Right cardiac atrium (tissue), 5 donors: ENCODE measurements at regions of chr2 and their contacts with region 1.

Region 1: DNA sequence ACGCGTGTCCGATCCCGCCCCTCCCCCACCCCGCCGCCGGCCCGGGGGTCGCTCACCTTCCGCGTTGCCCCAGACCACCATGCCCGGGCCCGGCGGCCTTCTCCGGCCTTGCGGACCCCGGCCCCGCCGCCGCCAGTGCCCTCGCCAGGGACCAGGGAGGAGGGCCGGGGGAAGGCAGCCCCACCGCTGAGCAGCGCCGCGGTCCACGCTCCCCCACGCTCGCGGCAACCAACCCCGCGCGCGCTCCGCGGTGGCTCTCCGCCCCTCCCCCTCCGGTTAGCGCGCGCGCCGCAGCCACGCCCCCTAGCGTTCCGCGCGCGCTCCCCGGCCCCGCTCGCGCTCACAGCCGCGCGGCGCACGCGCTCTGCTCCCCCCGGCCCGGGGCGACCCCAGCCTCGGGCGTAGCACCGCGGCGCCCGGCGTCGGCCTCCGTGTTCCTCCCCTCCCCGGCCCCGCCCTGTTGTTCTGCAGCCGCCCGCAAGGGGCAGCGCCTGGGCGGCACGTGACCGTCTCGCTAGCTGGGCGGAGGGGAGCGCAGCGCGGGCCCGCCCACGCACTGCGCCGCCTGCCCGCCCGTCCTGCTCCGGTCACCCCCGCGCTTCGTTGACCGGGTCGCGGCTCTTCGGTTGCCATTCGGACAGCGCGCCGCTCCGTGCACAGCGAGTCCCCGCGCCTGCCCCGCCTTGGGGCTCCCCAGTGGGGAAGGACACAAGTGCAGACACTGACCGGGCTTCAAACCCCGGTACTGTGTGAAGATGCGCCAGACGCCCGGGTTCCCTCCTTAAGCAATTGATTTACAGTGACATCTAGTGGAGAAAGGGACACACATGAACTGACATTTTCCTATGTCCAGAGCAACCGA is at the start of gene REV1:
- DNase-seq: peak; percentile 95 to 98 (median 97)
- ATAC-seq: peak; percentile 93 to 95
- H3K4me3 ChIP-seq: peak within 1 kb of the TSS; percentile 92
- H3K27ac ChIP-seq: peak within 1 kb of the TSS; percentile 96
- H3K4me1 ChIP-seq: peaks cover 2% of the 10 kb centered on the region
- H3K27me3 ChIP-seq: no peaks in the 10 kb centered on the region
- total RNA-seq, gene REV1: 31.0 to 37.1 (median 34.3) TPM

Region 2: DNA sequence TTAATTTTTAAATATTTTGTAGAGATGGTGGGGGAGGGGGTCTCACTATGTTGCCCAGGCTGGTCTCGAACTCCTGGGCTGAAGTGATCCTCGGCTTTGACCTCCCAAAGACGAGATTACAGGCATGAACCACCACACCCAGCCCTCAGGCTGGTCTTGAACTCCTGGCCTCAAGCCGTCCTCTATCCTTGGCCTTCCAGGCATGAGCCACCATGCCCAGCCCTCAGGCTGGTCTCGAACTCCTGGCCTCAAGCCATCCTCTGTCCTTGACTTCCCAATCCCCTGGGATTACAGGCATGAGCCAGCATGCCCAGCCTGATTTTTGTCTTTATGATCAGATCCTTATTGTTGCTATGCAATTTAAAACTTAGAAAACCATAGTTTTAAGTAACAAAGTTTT is 178.5 kb before region 1 on chr2:
- intact Hi-C with region 1: no loop called
- DNase-seq: no peak
- ATAC-seq: no peak
- H3K4me3 ChIP-seq: no peak overlapping the region
- H3K27ac ChIP-seq: no peak overlapping the region
- H3K4me1 ChIP-seq: no peaks in the 10 kb centered on the region
- H3K27me3 ChIP-seq: no peaks in the 10 kb centered on the region

Region 3: GRCh38 chr2:99337113-99338028 is 152.6 kb before region 1 on chr2 and contains the start of gene EIF5B:
- intact Hi-C with region 1: loop called in 3 of 4 experiments (anchors 5 to 10 kb)
- DNase-seq: peak; percentile 98 to 99 (median 99)
- ATAC-seq: peak; percentile 95
- H3K4me3 ChIP-seq: peak within 1 kb of the TSS; percentile 84
- H3K27ac ChIP-seq: peak within 1 kb of the TSS; percentile 98
- H3K4me1 ChIP-seq: peaks cover 2% of the 10 kb centered on the region
- H3K27me3 ChIP-seq: no peaks in the 10 kb centered on the region
- total RNA-seq, gene EIF5B: 67.1 to 79.9 (median 71.9) TPM

Region 4: DNA sequence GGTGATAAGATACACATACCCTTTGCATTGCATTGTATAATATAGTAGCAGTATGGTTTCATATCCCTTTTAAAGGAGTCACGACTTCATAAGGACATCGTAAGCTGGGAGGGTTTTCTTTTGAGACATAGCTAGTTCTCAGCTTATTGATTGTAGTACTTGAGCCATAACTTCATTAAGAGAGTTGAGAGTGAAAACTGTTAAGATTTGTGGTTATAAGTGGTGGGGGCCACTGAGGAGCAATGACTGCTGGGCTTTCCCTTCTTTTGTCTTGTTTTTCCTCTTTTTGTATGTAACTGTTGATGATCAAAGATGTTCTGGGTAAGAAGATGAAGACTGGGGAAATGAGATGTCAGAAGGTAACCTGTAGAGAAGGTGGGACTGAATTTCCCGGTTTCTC is 141.8 kb before region 1 on chr2:
- intact Hi-C with region 1: no loop called
- DNase-seq: no peak
- ATAC-seq: no peak
- H3K4me3 ChIP-seq: no peak overlapping the region
- H3K27ac ChIP-seq: no peak overlapping the region
- H3K4me1 ChIP-seq: peaks cover 2% of the 10 kb centered on the region
- H3K27me3 ChIP-seq: no peaks in the 10 kb centered on the region

Region 5: DNA sequence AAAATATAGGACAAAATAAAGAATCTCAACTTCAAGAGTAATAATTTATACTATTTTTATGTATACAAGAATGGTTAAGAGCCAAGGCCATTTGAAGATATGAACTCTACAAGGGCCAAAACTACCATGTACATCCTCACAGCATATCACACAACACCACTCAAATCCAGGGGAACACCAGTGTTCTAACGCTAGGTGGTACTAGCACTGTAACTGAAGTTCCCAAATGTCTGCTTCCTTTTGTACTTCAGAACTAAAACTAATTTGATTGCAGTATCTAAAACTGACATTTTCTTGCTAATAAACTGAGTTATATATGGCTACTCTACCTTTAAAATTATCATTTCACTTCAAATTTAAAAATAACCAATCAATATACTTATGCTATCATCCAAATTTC is 47.2 kb before region 1 on chr2:
- intact Hi-C with region 1: loop called in 2 of 4 experiments (anchors 2 kb)
- DNase-seq: no peak
- ATAC-seq: peak; percentile 52 to 57
- H3K4me3 ChIP-seq: no peak overlapping the region
- H3K27ac ChIP-seq: no peak overlapping the region
- H3K4me1 ChIP-seq: no peaks in the 10 kb centered on the region
- H3K27me3 ChIP-seq: no peaks in the 10 kb centered on the region